Calu3 (cell line): ENCODE measurements at regions of chr20 and their contacts with region 1.

Region 1: GRCh38 chr20:60262967-60263603 is 304.9 kb downstream of the CDH26 start:
- DNase-seq: peak; percentile 56
- H3K4me3 Mint-ChIP-seq: no peak overlapping the region
- H3K27ac Mint-ChIP-seq: no peak overlapping the region
- H3K4me1 Mint-ChIP-seq: peaks cover 7% of the 10 kb centered on the region
- H3K27me3 Mint-ChIP-seq: peaks cover 10% of the 10 kb centered on the region
- CTCF ChIP-seq: peak; percentile 66

Region 2: GRCh38 chr20:60057123-60057801 is 205.8 kb before region 1 on chr20:
- CTCF ChIA-PET with region 1: interaction called, 4 read pairs
- intact Hi-C with region 1: loop called (anchors 5 kb)
- DNase-seq: peak; percentile 67
- H3K4me3 Mint-ChIP-seq: no peak overlapping the region
- H3K27ac Mint-ChIP-seq: no peak overlapping the region
- H3K4me1 Mint-ChIP-seq: peaks cover 20% of the 10 kb centered on the region
- H3K27me3 Mint-ChIP-seq: peaks cover 76% of the 10 kb centered on the region
- CTCF ChIP-seq: peak; percentile 69

Region 3: GRCh38 chr20:60137629-60138245 is 125.3 kb before region 1 on chr20:
- CTCF ChIA-PET with region 1: no interaction called
- intact Hi-C with region 1: loop called (anchors 10 kb)
- DNase-seq: peak; percentile 58
- H3K4me3 Mint-ChIP-seq: peak overlapping the region; percentile 79
- H3K27ac Mint-ChIP-seq: no peak overlapping the region
- H3K4me1 Mint-ChIP-seq: peaks cover 2% of the 10 kb centered on the region
- H3K27me3 Mint-ChIP-seq: peaks cover 18% of the 10 kb centered on the region
- CTCF ChIP-seq: peak; percentile 50

Region 4: GRCh38 chr20:60210779-60211617 is 52.1 kb before region 1 on chr20:
- CTCF ChIA-PET with region 1: interaction called, 3 read pairs
- intact Hi-C with region 1: loop called (anchors 1 kb)
- DNase-seq: peak; percentile 74
- H3K4me3 Mint-ChIP-seq: no peak overlapping the region
- H3K27ac Mint-ChIP-seq: no peak overlapping the region
- H3K4me1 Mint-ChIP-seq: no peaks in the 10 kb centered on the region
- H3K27me3 Mint-ChIP-seq: peaks cover 13% of the 10 kb centered on the region
- CTCF ChIP-seq: peak; percentile 87

Region 5: GRCh38 chr20:60340247-60340646 is 77.2 kb after region 1 on chr20:
- CTCF ChIA-PET with region 1: no interaction called
- intact Hi-C with region 1: no loop called
- DNase-seq: no peak
- H3K4me3 Mint-ChIP-seq: no peak overlapping the region
- H3K27ac Mint-ChIP-seq: no peak overlapping the region
- H3K4me1 Mint-ChIP-seq: no peaks in the 10 kb centered on the region
- H3K27me3 Mint-ChIP-seq: no peaks in the 10 kb centered on the region
- CTCF ChIP-seq: no peak